Calu3 (cell line): ENCODE measurements at regions of chr17 and their contacts with region 1.

Region 1: GRCh38 chr17:39769974-39770587 is 32.3 kb downstream of the GRB7 start:
- DNase-seq: peak; percentile 100
- H3K4me3 Mint-ChIP-seq: peak overlapping the region; percentile 10
- H3K27ac Mint-ChIP-seq: peak overlapping the region; percentile 60
- H3K4me1 Mint-ChIP-seq: peaks cover 72% of the 10 kb centered on the region
- H3K27me3 Mint-ChIP-seq: peaks cover 13% of the 10 kb centered on the region
- CTCF ChIP-seq: no peak

Region 2: GRCh38 chr17:39527220-39527813 is 242.8 kb before region 1 on chr17:
- CTCF ChIA-PET with region 1: no interaction called
- intact Hi-C with region 1: no loop called
- DNase-seq: peak; percentile 72
- H3K4me3 Mint-ChIP-seq: no peak overlapping the region
- H3K27ac Mint-ChIP-seq: no peak overlapping the region
- H3K4me1 Mint-ChIP-seq: no peaks in the 10 kb centered on the region
- H3K27me3 Mint-ChIP-seq: no peaks in the 10 kb centered on the region
- CTCF ChIP-seq: peak; percentile 97

Region 3: GRCh38 chr17:39699818-39700147 is 70.3 kb before region 1 on chr17 and contains the start of gene ERBB2:
- CTCF ChIA-PET with region 1: interaction called, 34,714 read pairs
- intact Hi-C with region 1: loop called (anchors 1 kb)
- DNase-seq: peak; percentile 100
- H3K4me3 Mint-ChIP-seq: peak within 1 kb of the TSS; percentile 71
- H3K27ac Mint-ChIP-seq: peak within 1 kb of the TSS; percentile 67
- H3K4me1 Mint-ChIP-seq: peaks cover 68% of the 10 kb centered on the region
- H3K27me3 Mint-ChIP-seq: no peaks in the 10 kb centered on the region
- CTCF ChIP-seq: no peak
- total RNA-seq, gene ERBB2: 4,829 and 4,830 TPM in 2 replicates

Region 4: DNA sequence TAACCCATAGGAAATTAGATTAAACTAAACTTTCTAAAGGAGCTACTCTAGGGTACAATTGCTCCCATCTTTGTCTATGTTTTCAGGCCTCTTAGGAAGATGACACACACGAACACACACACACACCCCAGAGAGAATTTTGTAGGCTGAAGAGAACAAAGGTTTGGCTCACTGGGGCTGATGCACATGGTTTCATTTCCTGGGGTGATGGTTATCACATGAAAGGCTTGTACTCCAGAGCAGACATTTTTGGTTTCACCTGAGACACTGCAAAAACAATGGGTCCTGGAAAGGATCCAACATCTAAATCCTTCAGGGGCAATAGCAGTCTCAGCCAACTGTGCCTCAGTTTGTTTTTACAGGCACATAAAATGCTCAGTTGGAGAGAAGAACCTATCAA is 30.5 kb after region 1 on chr17:
- CTCF ChIA-PET with region 1: interaction called, 881 read pairs
- intact Hi-C with region 1: no loop called
- DNase-seq: peak; percentile 85
- H3K4me3 Mint-ChIP-seq: no peak overlapping the region
- H3K27ac Mint-ChIP-seq: no peak overlapping the region
- H3K4me1 Mint-ChIP-seq: peaks cover 17% of the 10 kb centered on the region
- H3K27me3 Mint-ChIP-seq: no peaks in the 10 kb centered on the region
- CTCF ChIP-seq: no peak

Region 5: GRCh38 chr17:39835038-39835786 is 65.1 kb after region 1 on chr17:
- CTCF ChIA-PET with region 1: interaction called, 1,211 read pairs
- intact Hi-C with region 1: no loop called
- DNase-seq: peak; percentile 79
- H3K4me3 Mint-ChIP-seq: no peak overlapping the region
- H3K27ac Mint-ChIP-seq: no peak overlapping the region
- H3K4me1 Mint-ChIP-seq: no peaks in the 10 kb centered on the region
- H3K27me3 Mint-ChIP-seq: no peaks in the 10 kb centered on the region
- CTCF ChIP-seq: no peak

Region 6: GRCh38 chr17:39894681-39895376 is 124.7 kb after region 1 on chr17:
- CTCF ChIA-PET with region 1: interaction called, 1,212 read pairs
- intact Hi-C with region 1: no loop called
- DNase-seq: peak; percentile 63
- H3K4me3 Mint-ChIP-seq: no peak overlapping the region
- H3K27ac Mint-ChIP-seq: no peak overlapping the region
- H3K4me1 Mint-ChIP-seq: peaks cover 23% of the 10 kb centered on the region
- H3K27me3 Mint-ChIP-seq: peaks cover 15% of the 10 kb centered on the region
- CTCF ChIP-seq: no peak

Region 7: DNA sequence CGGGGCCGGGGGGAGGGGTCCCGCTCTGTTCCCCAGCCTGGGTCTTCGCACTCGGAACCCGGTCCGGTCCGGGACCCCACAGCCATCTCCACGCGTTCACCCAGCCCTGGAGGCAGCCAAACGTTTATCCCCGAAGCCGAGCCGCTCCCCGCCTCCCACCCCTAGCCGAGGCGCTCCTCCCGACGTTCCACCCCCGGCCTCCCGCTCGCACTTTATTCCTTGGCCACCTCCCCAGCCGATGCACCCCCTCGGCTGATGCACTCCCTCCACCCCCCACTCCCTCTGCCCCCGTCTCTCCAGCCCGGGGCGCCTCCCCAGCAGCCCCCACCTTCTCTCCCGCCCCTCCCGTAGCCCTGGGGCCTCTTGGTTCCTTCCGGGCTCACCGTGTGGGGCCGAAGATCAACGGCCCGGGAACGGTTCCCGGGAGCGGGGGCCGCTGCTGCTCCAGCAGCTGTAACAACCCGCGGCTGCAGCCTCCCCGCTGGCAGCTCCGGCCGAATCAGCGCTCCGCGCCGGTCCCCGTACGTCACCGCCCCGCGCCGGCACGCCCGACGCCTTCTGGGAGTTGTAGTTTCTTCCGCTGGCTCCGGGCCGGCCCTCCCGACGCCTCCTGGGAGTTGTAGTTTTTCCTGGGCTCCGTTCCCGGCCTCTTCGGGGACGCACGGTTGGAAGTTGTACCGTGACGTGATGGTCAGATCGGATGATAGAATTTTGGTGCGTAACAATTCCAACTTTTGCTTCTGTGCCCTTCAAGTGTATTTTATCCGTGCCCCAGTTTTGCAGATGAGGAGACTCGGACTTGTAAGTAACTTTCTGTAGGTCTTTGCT is 157.2 kb after region 1 on chr17 and contains the starts of genes LRRC3C and ORMDL3:
- CTCF ChIA-PET with region 1: interaction called, 1,212 read pairs
- intact Hi-C with region 1: loop called (anchors 1 kb)
- DNase-seq: no peak
- H3K4me3 Mint-ChIP-seq: peak within 1 kb of the TSS; percentile 74
- H3K27ac Mint-ChIP-seq: peak within 1 kb of the TSS; percentile 66
- H3K4me1 Mint-ChIP-seq: peaks cover 60% of the 10 kb centered on the region
- H3K27me3 Mint-ChIP-seq: no peaks in the 10 kb centered on the region
- CTCF ChIP-seq: no peak
- total RNA-seq, gene LRRC3C: not detected in 2 replicates
- total RNA-seq, gene ORMDL3: 1,738 and 1,968 TPM in 2 replicates

Region 8: DNA sequence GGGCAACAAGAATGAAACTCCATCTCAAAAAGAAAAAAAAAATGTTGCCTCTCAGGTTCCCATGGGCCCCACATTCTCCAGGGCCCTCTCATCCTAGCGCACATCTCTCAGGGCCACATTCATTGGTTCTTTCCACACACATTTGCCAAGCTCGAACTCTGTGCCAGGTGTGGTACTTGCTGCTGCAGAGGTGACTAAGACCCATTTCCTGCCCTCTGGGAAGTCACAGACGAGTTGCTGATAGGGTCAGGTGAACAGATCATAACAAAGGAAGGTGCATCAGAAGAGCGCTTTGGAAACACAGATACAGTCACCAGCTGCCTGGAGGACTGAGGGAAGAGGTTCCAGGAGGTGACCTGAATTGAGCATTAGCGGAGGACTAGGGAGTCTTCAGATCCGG is 193.7 kb after region 1 on chr17:
- CTCF ChIA-PET with region 1: interaction called, 1,070 read pairs
- intact Hi-C with region 1: loop called (anchors 1 kb)
- DNase-seq: peak; percentile 94
- H3K4me3 Mint-ChIP-seq: no peak overlapping the region
- H3K27ac Mint-ChIP-seq: peak overlapping the region; percentile 0
- H3K4me1 Mint-ChIP-seq: peaks cover 45% of the 10 kb centered on the region
- H3K27me3 Mint-ChIP-seq: peaks cover 32% of the 10 kb centered on the region
- CTCF ChIP-seq: no peak

Region 9: GRCh38 chr17:40209404-40210093 is 439.5 kb after region 1 on chr17:
- CTCF ChIA-PET with region 1: no interaction called
- intact Hi-C with region 1: no loop called
- DNase-seq: no peak
- H3K4me3 Mint-ChIP-seq: no peak overlapping the region
- H3K27ac Mint-ChIP-seq: no peak overlapping the region
- H3K4me1 Mint-ChIP-seq: no peaks in the 10 kb centered on the region
- H3K27me3 Mint-ChIP-seq: no peaks in the 10 kb centered on the region
- CTCF ChIP-seq: no peak